ENCODE measurements at regions of chr20 and their contacts with region 1.

Region 1: DNA sequence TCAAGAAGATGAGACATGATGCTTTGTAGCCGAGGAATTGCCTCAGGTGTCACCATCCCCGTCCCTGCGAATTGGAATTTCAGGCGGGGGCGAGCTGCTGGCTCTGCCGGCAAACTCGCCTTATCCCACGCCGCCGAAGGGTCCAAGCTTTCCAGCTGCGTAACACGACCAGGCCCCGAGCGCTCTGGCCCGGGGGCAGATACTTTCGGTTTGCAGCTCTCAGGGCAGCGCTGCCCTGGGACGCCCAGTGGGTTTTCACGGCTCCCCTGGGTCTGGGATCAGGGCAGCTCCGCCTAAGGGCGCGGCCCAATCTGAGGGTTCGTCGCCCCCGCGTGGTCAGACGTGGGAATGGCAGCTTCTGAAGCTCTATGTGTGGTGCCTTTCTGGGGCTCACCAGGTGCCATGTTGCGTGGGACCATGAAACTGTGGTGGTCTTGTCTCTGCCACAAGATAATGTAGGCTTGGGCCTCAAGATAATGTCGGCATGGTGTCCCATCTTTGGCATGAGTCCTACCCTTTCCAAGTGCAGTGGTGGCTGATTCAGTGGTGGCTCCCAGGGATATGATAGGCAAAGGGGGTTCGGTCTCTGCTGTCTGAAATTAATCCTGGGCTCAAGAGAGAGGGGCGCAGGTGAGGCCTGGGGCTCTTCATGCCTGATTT is 20.9 kb downstream of the PIGT start:
- DNase-seq: peak; percentile 97
- H3K4me3 Mint-ChIP-seq: peak overlapping the region; percentile 89
- H3K27ac Mint-ChIP-seq: peak overlapping the region; percentile 43
- H3K4me1 Mint-ChIP-seq: peaks cover 4% of the 10 kb centered on the region
- H3K27me3 Mint-ChIP-seq: no peaks in the 10 kb centered on the region
- CTCF ChIP-seq: peak; percentile 97

Region 2: DNA sequence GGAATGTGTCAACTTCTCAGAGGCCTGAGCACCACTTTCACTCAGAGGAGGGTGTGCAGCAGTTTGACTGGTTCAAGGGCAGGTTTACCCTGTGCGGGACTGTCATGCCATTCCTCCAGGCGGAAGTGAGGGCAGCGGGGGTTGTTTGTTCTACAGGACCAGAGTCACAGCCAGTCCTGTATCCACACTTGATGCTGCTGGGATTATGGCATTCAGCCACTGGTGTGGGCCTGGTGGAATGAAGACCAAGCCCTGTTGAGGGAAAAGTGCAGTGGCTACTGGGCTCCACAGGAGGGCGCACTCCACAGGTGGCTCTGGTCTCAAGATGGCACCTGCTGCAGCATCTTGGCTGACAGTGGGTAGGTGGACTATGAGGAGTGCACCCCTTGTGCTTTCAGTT is 200.9 kb before region 1 on chr20:
- CTCF ChIA-PET with region 1: no interaction called
- intact Hi-C with region 1: no loop called
- DNase-seq: peak; percentile 70
- H3K4me3 Mint-ChIP-seq: no peak overlapping the region
- H3K27ac Mint-ChIP-seq: no peak overlapping the region
- H3K4me1 Mint-ChIP-seq: no peaks in the 10 kb centered on the region
- H3K27me3 Mint-ChIP-seq: peaks cover 52% of the 10 kb centered on the region
- CTCF ChIP-seq: peak; percentile 90

Region 3: GRCh38 chr20:45347936-45348778 is 88.7 kb before region 1 on chr20 and contains the start of gene SDC4:
- CTCF ChIA-PET with region 1: interaction called, 11 read pairs
- intact Hi-C with region 1: no loop called
- DNase-seq: peak; percentile 89
- H3K4me3 Mint-ChIP-seq: peak within 1 kb of the TSS; percentile 95
- H3K27ac Mint-ChIP-seq: peak within 1 kb of the TSS; percentile 99
- H3K4me1 Mint-ChIP-seq: peaks cover 30% of the 10 kb centered on the region
- H3K27me3 Mint-ChIP-seq: no peaks in the 10 kb centered on the region
- CTCF ChIP-seq: no peak
- total RNA-seq, gene SDC4: 238 and 256 TPM in 2 replicates

Region 4: GRCh38 chr20:45373353-45374100 is 63.3 kb before region 1 on chr20:
- CTCF ChIA-PET with region 1: interaction called, 110 read pairs
- intact Hi-C with region 1: loop called (anchors 2 kb)
- DNase-seq: peak; percentile 98
- H3K4me3 Mint-ChIP-seq: peak overlapping the region; percentile 84
- H3K27ac Mint-ChIP-seq: peak overlapping the region; percentile 70
- H3K4me1 Mint-ChIP-seq: no peaks in the 10 kb centered on the region
- H3K27me3 Mint-ChIP-seq: no peaks in the 10 kb centered on the region
- CTCF ChIP-seq: peak; percentile 94

Region 5: DNA sequence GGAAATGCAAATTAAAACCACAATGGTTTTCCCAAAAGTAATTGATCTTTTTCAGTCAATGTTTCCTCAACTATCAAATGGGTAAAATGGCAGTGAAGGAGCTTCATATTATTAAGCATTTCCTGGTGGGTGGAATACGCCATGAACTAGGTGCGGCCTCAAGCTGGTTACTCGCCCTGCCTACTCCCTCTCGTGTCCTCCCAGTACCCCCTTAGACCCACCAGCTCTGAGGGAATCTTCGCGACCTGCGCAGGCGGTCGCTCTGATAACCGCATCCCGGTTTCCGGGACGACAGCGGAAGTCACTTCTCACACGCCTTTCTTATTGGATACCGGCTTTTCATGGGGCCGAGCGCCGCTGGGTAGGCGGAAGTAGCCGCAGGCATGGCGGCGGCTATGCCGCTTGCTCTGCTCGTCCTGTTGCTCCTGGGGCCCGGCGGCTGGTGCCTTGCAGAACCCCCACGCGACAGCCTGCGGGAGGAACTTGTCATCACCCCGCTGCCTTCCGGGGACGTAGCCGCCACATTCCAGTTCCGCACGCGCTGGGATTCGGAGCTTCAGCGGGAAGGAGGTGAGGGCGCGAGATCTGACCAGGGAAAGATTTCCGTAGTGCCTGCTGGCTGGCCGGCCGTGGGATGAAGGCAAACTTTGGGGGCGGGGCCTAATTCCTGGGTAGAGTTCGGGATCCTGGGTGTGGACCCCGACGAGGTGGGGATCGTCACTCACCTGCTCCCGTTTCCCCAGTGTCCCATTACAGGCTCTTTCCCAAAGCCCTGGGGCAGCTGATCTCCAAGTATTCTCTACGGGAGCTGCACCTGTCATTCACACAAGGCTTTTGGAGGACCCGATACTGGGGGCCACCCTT is 20.9 kb before region 1 on chr20 and contains the start of gene PIGT:
- CTCF ChIA-PET with region 1: interaction called, 10 read pairs
- intact Hi-C with region 1: no loop called
- DNase-seq: peak; percentile 91
- H3K4me3 Mint-ChIP-seq: peak within 1 kb of the TSS; percentile 92
- H3K27ac Mint-ChIP-seq: peak within 1 kb of the TSS; percentile 80
- H3K4me1 Mint-ChIP-seq: peaks cover 24% of the 10 kb centered on the region
- H3K27me3 Mint-ChIP-seq: no peaks in the 10 kb centered on the region
- CTCF ChIP-seq: no peak
- total RNA-seq, gene PIGT: 192 and 193 TPM in 2 replicates